HepG2 (cell line): ENCODE measurements at regions of chr3 and their contacts with region 1.

Region 1: DNA sequence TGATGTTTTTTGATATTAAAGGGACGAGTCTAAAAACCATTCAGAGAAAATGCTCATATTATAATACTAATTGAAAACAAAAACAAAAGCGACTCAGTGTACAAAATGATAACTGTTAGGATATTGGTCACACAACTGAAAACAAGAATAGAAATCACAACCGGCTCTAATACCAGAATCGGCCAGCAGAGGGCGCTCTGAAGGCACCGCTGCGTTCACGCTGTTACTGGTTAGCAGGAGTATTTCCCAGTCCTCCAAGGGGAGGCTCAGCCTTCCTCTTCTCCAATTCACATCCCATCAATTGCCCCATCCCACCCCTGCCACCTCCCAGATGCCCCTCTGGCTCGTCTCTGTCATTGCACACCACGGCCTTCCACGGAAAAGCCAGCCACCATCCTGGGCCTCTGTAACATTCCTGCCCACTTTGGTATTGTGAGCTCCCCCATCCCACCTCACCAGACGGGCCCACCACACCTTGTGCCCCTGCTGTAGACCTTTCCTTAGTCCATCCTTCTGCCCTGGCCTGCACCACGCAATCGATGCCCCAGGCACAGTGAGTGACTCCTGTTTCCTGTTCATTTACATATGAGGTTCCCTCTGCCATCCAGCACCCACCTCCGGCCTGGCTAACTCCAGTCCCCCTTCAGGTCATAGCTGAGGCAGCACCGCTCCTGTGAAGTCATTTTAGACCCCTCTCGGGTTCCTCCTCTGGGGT is 8.5 kb downstream of the FAM107A start:
- DNase-seq: peak; percentile 35
- ATAC-seq: peak; percentile 55
- H3K4me3 ChIP-seq: no peak overlapping the region
- H3K27ac ChIP-seq: no peak overlapping the region
- H3K4me1 ChIP-seq: peaks cover 30% of the 10 kb centered on the region
- H3K27me3 ChIP-seq: no peaks in the 10 kb centered on the region
- CTCF ChIP-seq: peak; percentile 82
- EP300 ChIP-seq: no peak
- POLR2A ChIP-seq: no peak
- RAD21 ChIP-seq: peak; percentile 44; the same call in 1 of the 2 replicates

Region 2: DNA sequence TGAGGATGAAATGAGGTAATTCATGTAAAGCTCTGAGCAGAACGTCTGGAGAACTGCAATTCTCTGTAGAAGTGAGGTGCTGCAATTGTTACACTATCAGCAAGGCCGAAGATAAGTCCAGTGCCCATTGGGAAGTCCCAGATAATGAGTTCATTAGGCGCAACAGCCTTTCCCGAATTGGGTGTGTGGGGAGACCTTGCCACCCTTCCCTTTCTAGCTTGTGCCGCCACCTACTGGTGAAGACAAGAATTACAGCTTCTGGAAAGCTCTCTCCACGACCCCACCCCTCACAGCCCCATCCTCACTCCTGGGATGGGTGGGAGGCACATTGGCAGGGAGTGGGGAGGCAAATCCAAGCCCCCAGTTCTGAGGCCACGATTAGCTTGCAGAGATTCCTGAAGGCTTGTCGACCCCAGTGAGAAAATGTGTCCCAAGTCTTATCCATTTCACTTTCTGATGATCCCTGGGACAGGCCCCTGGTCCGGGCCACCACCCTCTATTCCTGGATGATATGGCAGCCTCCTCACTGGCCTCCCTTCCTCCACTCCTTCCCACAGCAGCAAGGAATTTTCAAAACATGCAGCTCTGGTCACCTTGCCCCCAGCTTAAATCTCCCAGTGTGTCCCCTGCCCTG is 61.5 kb after region 1 on chr3:
- CTCF ChIA-PET with region 1: interaction called, 18 read pairs
- POLR2A ChIA-PET with region 1: no interaction called
- in situ Hi-C with region 1: loop called (anchors 5 kb)
- intact Hi-C with region 1: loop called (anchors 1 kb)
- DNase-seq: peak; percentile 46
- ATAC-seq: peak; percentile 79
- H3K4me3 ChIP-seq: no peak overlapping the region
- H3K27ac ChIP-seq: no peak overlapping the region
- H3K4me1 ChIP-seq: peaks cover 27% of the 10 kb centered on the region
- H3K27me3 ChIP-seq: peaks cover 5 to 31% of the 10 kb centered on the region in 2 experiments
- CTCF ChIP-seq: peak; percentile 93
- EP300 ChIP-seq: no peak
- POLR2A ChIP-seq: no peak
- RAD21 ChIP-seq: peak; percentile 75

Region 3: GRCh38 chr3:58722561-58722960 is 153.8 kb after region 1 on chr3:
- CTCF ChIA-PET with region 1: no interaction called
- POLR2A ChIA-PET with region 1: no interaction called
- in situ Hi-C with region 1: no loop called
- intact Hi-C with region 1: no loop called
- DNase-seq: no peak
- ATAC-seq: no peak
- H3K4me3 ChIP-seq: no peak overlapping the region
- H3K27ac ChIP-seq: no peak overlapping the region
- H3K4me1 ChIP-seq: peaks cover 8% of the 10 kb centered on the region
- H3K27me3 ChIP-seq: no peaks in the 10 kb centered on the region
- CTCF ChIP-seq: no peak
- EP300 ChIP-seq: no peak
- POLR2A ChIP-seq: no peak
- RAD21 ChIP-seq: no peak